Panc1 (cell line): ENCODE measurements at regions of chr3 and their contacts with region 1.

Region 1: GRCh38 chr3:168620826-168621225 is 525.1 kb upstream of the GOLIM4 start:
- DNase-seq: peak; percentile 7
- ATAC-seq: peak; percentile 65; the same call in 1 of the 2 replicates
- H3K4me3 ChIP-seq: no peak overlapping the region
- H3K27ac ChIP-seq: no peak overlapping the region
- H3K4me1 ChIP-seq: no peaks in the 10 kb centered on the region
- H3K27me3 ChIP-seq: no peaks in the 10 kb centered on the region
- CTCF ChIP-seq: peak; percentile 64

Region 2: DNA sequence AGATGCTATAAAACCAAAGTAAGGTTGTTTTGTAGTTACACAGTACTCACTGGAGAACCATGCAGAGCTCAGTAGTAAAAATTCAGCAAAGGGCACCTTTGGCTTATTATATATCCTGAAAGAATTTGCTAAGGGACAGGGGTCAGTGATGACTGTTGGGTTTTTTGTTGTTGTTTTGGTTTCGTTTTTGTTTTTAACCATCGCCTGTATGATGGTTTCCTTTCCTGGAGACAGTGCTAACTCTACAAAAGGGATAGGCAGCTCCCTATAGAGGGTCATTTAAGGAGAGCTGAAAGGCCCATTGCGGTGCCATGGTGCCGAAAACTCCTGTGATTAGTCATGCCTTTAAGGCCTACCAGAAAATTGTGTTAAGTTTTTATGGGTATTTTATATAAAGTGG is 406.9 kb before region 1 on chr3:
- CTCF ChIA-PET with region 1: interaction called, 3 read pairs
- POLR2A ChIA-PET with region 1: no interaction called
- in situ Hi-C with region 1: no loop called
- intact Hi-C with region 1: loop called (anchors 1 kb)
- DNase-seq: no peak
- ATAC-seq: peak; percentile 65; the same call in 1 of the 2 replicates
- H3K4me3 ChIP-seq: peak overlapping the region in 1 of 2 experiments; percentile 7; a peak in 1 of 4 replicates
- H3K27ac ChIP-seq: no peak overlapping the region
- H3K4me1 ChIP-seq: no peaks in the 10 kb centered on the region; the same call in 1 of the 2 replicates
- H3K27me3 ChIP-seq: no peaks in the 10 kb centered on the region
- CTCF ChIP-seq: no peak

Region 3: GRCh38 chr3:168714609-168715240 is 93.9 kb after region 1 on chr3:
- CTCF ChIA-PET with region 1: no interaction called
- POLR2A ChIA-PET with region 1: no interaction called
- in situ Hi-C with region 1: no loop called
- intact Hi-C with region 1: no loop called
- DNase-seq: no peak
- ATAC-seq: no peak
- H3K4me3 ChIP-seq: no peak overlapping the region
- H3K27ac ChIP-seq: no peak overlapping the region
- H3K4me1 ChIP-seq: no peaks in the 10 kb centered on the region
- H3K27me3 ChIP-seq: no peaks in the 10 kb centered on the region
- CTCF ChIP-seq: no peak

Region 4: GRCh38 chr3:169534443-169534842 is 913.6 kb after region 1 on chr3:
- CTCF ChIA-PET with region 1: no interaction called
- POLR2A ChIA-PET with region 1: no interaction called
- in situ Hi-C with region 1: no loop called
- intact Hi-C with region 1: no loop called
- DNase-seq: no peak
- ATAC-seq: no peak
- H3K4me3 ChIP-seq: no peak overlapping the region
- H3K27ac ChIP-seq: no peak overlapping the region
- H3K4me1 ChIP-seq: no peaks in the 10 kb centered on the region
- H3K27me3 ChIP-seq: no peaks in the 10 kb centered on the region
- CTCF ChIP-seq: no peak